Common myeloid progenitor, CD34-positive (primary cell): ENCODE measurements at regions of chr15 and their contacts with region 1.

Region 1: DNA sequence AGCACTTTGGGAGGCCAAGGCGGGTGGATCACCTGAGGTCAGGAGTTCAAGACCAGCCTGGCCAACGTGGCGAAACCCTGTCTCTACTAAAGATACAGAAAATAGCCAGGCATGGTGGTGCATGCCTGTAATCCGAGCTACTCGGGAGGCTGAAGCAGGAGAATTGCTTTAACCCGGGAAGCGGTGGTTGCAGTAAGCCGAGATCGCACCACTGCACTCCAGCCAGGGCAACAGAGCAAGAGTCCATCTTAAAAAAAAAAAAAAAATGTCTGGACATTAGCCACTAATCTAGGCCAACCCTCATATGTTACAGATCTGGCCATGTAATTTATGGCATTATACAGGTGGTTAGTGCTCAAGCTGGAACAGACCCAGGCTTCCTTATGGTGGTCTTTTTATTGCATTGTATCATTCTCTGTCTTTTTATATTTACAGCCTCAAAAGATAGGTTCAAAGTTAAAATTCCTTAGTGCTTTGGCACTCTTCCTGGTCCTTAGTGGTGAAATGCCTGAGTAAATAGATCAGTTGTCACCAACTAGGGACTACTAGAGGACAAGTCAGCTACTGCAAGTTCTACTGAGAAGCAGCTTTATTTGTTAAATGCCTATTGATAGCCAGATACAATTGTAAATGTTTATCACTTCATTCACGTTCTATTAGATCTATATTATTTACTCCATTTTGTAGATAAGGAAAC is 16.0 kb downstream of the STARD9 start:
- DNase-seq: peak in 2 of 3 donors; percentile 32 to 41
- H3K4me3 ChIP-seq: no peak overlapping the region
- H3K27ac ChIP-seq: no peak overlapping the region
- H3K4me1 ChIP-seq: peaks cover 11 to 31% (median 18%) of the 10 kb centered on the region in 4 experiments
- H3K27me3 ChIP-seq: no peaks in the 10 kb centered on the region

Region 2: GRCh38 chr15:42483677-42484076 is 107.7 kb before region 1 on chr15:
- CTCF ChIA-PET with region 1: no interaction called
- POLR2A ChIA-PET with region 1: no interaction called
- DNase-seq: no peak
- H3K4me3 ChIP-seq: no peak overlapping the region
- H3K27ac ChIP-seq: no peak overlapping the region
- H3K4me1 ChIP-seq: no peaks in the 10 kb centered on the region
- H3K27me3 ChIP-seq: no peaks in the 10 kb centered on the region

Region 3: GRCh38 chr15:42575188-42576039 is 16.0 kb before region 1 on chr15 and contains the start of gene STARD9:
- CTCF ChIA-PET with region 1: interaction called, 7 read pairs
- POLR2A ChIA-PET with region 1: interaction called, 11 read pairs
- DNase-seq: peak; percentile 96 to 99 (median 98)
- H3K4me3 ChIP-seq: peak within 1 kb of the TSS; percentile 67 to 91 (median 83)
- H3K27ac ChIP-seq: peak within 1 kb of the TSS in 1 of 2 experiments; percentile 64
- H3K4me1 ChIP-seq: peaks cover 10 to 51% (median 38%) of the 10 kb centered on the region in 4 experiments
- H3K27me3 ChIP-seq: no peaks in the 10 kb centered on the region